ENCODE measurements at regions of chr3 and their contacts with region 1.

Region 1: GRCh38 chr3:34260271-34261006 is 462.0 kb downstream of the PDCD6IP start:
- DNase-seq: peak; percentile 10
- ATAC-seq: peak; percentile 77
- H3K4me3 ChIP-seq: no peak overlapping the region
- H3K27ac ChIP-seq: no peak overlapping the region
- H3K4me1 ChIP-seq: no peaks in the 10 kb centered on the region
- H3K27me3 ChIP-seq: no peaks in the 10 kb centered on the region
- CTCF ChIP-seq: peak; percentile 49
- EP300 ChIP-seq: no peak
- POLR2A ChIP-seq: no peak
- RAD21 ChIP-seq: no peak

Region 2: DNA sequence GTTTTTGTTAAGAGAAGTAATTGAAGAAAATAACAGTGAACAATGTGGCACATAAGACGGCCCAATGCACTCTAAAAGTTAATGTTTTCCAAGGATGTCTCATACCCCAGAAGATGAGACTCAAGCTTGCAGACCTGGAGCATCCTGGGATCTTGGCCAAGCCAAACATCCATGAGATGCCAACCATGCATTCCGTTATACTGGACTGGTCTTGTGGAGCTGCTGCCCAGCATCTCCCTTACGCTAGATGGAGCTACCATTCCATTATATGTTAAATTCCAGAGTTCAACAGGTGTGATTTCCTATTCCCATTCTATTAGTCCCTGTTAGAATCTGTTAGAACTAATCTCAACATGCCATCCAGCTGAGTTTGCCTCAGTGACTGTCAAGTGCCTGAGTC is 280.2 kb before region 1 on chr3:
- CTCF ChIA-PET with region 1: no interaction called
- POLR2A ChIA-PET with region 1: no interaction called
- in situ Hi-C with region 1: no loop called
- intact Hi-C with region 1: loop called (anchors 5 kb)
- DNase-seq: peak; percentile 66
- ATAC-seq: peak; percentile 99
- H3K4me3 ChIP-seq: no peak overlapping the region
- H3K27ac ChIP-seq: no peak overlapping the region
- H3K4me1 ChIP-seq: no peaks in the 10 kb centered on the region
- H3K27me3 ChIP-seq: no peaks in the 10 kb centered on the region
- CTCF ChIP-seq: peak; percentile 86
- EP300 ChIP-seq: no peak
- POLR2A ChIP-seq: no peak
- RAD21 ChIP-seq: peak; percentile 82

Region 3: GRCh38 chr3:35946121-35946853 is 1685.8 kb after region 1 on chr3:
- CTCF ChIA-PET with region 1: no interaction called
- POLR2A ChIA-PET with region 1: no interaction called
- in situ Hi-C with region 1: no loop called
- intact Hi-C with region 1: loop called (anchors 5 kb)
- DNase-seq: peak; percentile 18
- ATAC-seq: no peak
- H3K4me3 ChIP-seq: no peak overlapping the region
- H3K27ac ChIP-seq: no peak overlapping the region
- H3K4me1 ChIP-seq: no peaks in the 10 kb centered on the region
- H3K27me3 ChIP-seq: no peaks in the 10 kb centered on the region
- CTCF ChIP-seq: 0 out of 2 replicates have a peak, but pooled peaks have one; percentile 12
- EP300 ChIP-seq: no peak
- POLR2A ChIP-seq: no peak
- RAD21 ChIP-seq: no peak

Measured in HepG2 (cell line).